ENCODE measurements at regions of chr17 and their contacts with region 1.

Region 1: GRCh38 chr17:64025732-64026294 is 5.4 kb upstream of the ICAM2 start:
- DNase-seq: peak; percentile 89 to 98 (median 93)
- ATAC-seq: peak; percentile 84
- H3K4me3 ChIP-seq: peak overlapping the region; percentile 46
- H3K4me3 Mint-ChIP-seq: peak overlapping the region; percentile 68
- H3K27ac ChIP-seq: peak overlapping the region; percentile 74 to 91
- H3K27ac Mint-ChIP-seq: peak overlapping the region; percentile 100
- H3K4me1 ChIP-seq: peaks cover 78% of the 10 kb centered on the region
- H3K4me1 Mint-ChIP-seq: peaks cover 59% of the 10 kb centered on the region
- H3K27me3 ChIP-seq: no peaks in the 10 kb centered on the region
- H3K27me3 Mint-ChIP-seq: no peaks in the 10 kb centered on the region
- CTCF ChIP-seq: peak; percentile 99

Region 2: DNA sequence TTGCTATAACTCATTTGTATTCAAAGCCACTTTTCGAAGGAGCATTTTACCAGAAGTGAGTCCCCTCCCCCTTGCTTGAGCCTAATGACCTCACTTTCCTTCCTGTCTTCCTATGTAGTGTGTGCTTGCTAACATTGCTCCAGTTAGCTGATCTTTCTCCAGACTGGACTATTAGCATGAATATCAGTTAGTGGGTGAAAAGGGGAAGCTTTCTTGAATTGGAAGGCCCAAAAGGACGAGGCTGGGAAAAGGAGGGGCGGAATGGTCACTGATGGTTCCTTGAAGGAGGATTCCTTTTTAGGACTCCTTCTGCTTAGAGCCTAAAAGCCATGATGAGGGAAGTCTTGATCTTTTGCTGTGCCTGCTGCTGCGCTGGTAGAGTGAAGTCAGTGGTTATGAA is 391.6 kb before region 1 on chr17:
- CTCF ChIA-PET with region 1: no interaction called
- POLR2A ChIA-PET with region 1: no interaction called
- intact Hi-C with region 1: no loop called
- DNase-seq: no peak
- ATAC-seq: no peak
- H3K4me3 ChIP-seq: no peak overlapping the region
- H3K4me3 Mint-ChIP-seq: no peak overlapping the region
- H3K27ac ChIP-seq: no peak overlapping the region
- H3K27ac Mint-ChIP-seq: no peak overlapping the region
- H3K4me1 ChIP-seq: peaks cover 10% of the 10 kb centered on the region
- H3K4me1 Mint-ChIP-seq: peaks cover 66% of the 10 kb centered on the region
- H3K27me3 ChIP-seq: no peaks in the 10 kb centered on the region
- H3K27me3 Mint-ChIP-seq: no peaks in the 10 kb centered on the region
- CTCF ChIP-seq: no peak

Region 3: GRCh38 chr17:63919311-63919723 is 106.5 kb before region 1 on chr17:
- CTCF ChIA-PET with region 1: interaction called, 75 read pairs
- POLR2A ChIA-PET with region 1: interaction called, 13 read pairs
- intact Hi-C with region 1: loop called (anchors 1 kb)
- DNase-seq: peak; percentile 58 to 89 (median 66)
- ATAC-seq: peak; percentile 100
- H3K4me3 ChIP-seq: no peak overlapping the region
- H3K4me3 Mint-ChIP-seq: no peak overlapping the region
- H3K27ac ChIP-seq: no peak overlapping the region
- H3K27ac Mint-ChIP-seq: peak overlapping the region; percentile 9
- H3K4me1 ChIP-seq: peaks cover 8% of the 10 kb centered on the region
- H3K4me1 Mint-ChIP-seq: peaks cover 6% of the 10 kb centered on the region
- H3K27me3 ChIP-seq: no peaks in the 10 kb centered on the region
- H3K27me3 Mint-ChIP-seq: no peaks in the 10 kb centered on the region
- CTCF ChIP-seq: peak; percentile 95

Region 4: DNA sequence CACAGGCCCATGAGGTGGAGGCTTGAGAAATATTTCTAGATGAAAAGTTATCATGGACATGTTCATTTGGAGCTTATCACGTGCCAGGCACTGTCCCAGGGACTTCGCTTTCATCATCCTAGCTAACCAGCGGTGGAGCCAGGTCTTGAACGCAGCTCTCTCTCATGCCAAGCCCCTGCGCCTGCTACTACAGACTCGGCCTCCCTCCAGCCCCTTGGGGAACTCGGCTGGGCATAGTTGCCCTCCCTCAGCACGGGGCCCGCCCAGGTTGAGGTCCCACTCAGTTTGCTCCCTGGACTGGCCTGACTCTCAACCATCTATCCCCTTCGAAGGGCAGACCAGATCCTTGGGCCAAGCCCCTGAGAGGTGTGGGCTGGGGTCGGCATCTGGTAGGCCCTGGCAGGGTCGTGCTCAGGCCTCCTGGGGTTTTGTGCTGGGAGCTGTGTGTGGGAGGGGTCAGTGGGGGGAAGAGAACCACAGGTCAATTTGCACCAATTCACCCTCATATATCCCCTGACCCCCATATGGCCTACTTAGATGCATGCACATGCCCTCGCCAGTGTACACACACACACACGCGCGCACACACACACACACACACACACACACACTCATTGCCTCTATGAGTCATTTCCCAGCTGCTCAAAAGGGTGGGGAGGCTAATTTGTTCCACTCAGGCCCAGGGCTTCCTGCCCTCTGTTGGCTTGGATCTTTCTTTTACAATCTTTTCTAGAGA is 41.0 kb before region 1 on chr17:
- CTCF ChIA-PET with region 1: interaction called, 30 read pairs
- POLR2A ChIA-PET with region 1: interaction called, 14 read pairs
- intact Hi-C with region 1: no loop called
- DNase-seq: peak in 11 of 14 experiments; percentile 24 to 83 (median 49)
- ATAC-seq: peak; percentile 93
- H3K4me3 ChIP-seq: no peak overlapping the region
- H3K4me3 Mint-ChIP-seq: peak overlapping the region; percentile 63
- H3K27ac ChIP-seq: peak overlapping the region in 1 of 2 donors; percentile 0
- H3K27ac Mint-ChIP-seq: peak overlapping the region; percentile 77
- H3K4me1 ChIP-seq: peaks cover 26% of the 10 kb centered on the region
- H3K4me1 Mint-ChIP-seq: peaks cover 26% of the 10 kb centered on the region
- H3K27me3 ChIP-seq: no peaks in the 10 kb centered on the region
- H3K27me3 Mint-ChIP-seq: no peaks in the 10 kb centered on the region
- CTCF ChIP-seq: no peak

Region 5: GRCh38 chr17:64005734-64006167 is 20.1 kb before region 1 on chr17:
- CTCF ChIA-PET with region 1: interaction called, 111 read pairs
- POLR2A ChIA-PET with region 1: interaction called, 156 read pairs
- intact Hi-C with region 1: no loop called
- DNase-seq: no peak
- ATAC-seq: no peak
- H3K4me3 ChIP-seq: no peak overlapping the region
- H3K4me3 Mint-ChIP-seq: no peak overlapping the region
- H3K27ac ChIP-seq: peak overlapping the region in 1 of 2 donors; percentile 64
- H3K27ac Mint-ChIP-seq: peak overlapping the region; percentile 75
- H3K4me1 ChIP-seq: peaks cover 51% of the 10 kb centered on the region
- H3K4me1 Mint-ChIP-seq: peaks cover 47% of the 10 kb centered on the region
- H3K27me3 ChIP-seq: no peaks in the 10 kb centered on the region
- H3K27me3 Mint-ChIP-seq: no peaks in the 10 kb centered on the region
- CTCF ChIP-seq: no peak

Region 6: DNA sequence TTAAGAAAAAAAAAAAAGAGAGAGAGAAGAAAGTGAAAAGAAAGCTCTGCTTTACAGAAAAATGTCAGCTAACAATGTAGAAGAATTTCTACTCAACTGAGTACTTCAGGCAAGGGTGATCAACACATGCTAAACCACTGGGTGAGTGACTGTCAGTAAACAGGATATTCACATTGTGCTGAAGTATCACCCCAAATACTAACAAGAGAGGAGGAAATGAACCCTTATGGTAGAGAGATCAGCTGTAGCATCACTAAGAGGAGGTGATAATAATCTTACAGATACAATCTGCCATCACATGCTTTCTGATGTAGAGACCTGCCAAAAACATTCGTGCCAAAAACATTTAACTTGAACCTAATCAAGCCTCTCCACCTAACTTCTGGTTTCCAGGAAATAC is 25.3 kb after region 1 on chr17:
- CTCF ChIA-PET with region 1: interaction called, 9 read pairs
- POLR2A ChIA-PET with region 1: interaction called, 49 read pairs
- intact Hi-C with region 1: loop called in 1 of 2 experiments (anchors 2 kb)
- DNase-seq: peak in 5 of 14 experiments; percentile 16 to 88 (median 69)
- ATAC-seq: peak; percentile 100
- H3K4me3 ChIP-seq: no peak overlapping the region
- H3K4me3 Mint-ChIP-seq: peak overlapping the region; percentile 17
- H3K27ac ChIP-seq: peak overlapping the region in 1 of 2 donors; percentile 78
- H3K27ac Mint-ChIP-seq: peak overlapping the region; percentile 85
- H3K4me1 ChIP-seq: peaks cover 59% of the 10 kb centered on the region
- H3K4me1 Mint-ChIP-seq: peaks cover 57% of the 10 kb centered on the region
- H3K27me3 ChIP-seq: no peaks in the 10 kb centered on the region
- H3K27me3 Mint-ChIP-seq: no peaks in the 10 kb centered on the region
- CTCF ChIP-seq: no peak

Region 7: DNA sequence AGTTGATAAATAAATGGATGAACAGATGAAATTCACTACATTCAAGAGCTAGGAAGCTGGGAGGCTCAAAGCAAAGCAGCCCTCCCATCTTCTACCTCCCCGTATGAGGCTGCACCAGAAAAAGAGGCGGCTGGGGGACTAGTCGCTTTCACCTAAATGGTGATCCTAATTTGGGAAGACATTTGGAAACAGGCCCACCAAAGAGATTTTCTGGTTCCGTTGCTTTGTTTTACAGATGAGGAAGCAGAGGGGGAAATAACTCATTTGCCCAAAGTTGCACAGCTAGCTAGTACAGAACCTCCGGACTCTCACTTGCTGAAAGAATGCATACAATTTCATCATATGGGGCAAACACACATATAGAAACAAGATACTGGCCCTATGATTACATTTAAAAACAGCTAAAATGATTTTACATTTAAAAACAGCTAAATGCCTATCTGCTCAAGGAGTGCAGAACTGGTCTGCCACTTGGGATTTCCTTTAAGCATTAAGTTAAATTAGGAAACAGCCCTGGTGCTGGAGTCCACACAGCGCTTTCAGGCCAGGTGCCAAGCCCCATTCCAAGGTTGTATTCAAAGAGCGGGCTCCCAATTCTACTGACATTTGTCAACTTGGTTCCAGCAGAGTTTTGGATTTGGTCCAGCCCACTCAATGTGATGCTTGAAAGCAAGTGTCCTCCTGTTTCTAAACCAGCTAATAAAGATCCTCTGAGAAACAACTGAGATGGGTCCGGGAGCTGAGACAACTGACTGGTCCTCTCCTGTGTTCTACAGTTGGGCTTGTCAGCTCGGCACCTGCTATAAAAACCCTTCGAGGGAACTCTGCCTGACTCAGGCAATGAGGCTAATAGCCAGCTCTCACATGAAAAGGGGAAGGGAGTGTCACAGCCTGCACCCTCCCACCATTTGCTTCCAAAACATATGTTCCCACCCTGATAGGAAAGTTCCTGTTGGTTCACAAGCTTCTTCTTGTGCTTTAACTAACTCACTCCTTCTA is 92.5 kb after region 1 on chr17:
- CTCF ChIA-PET with region 1: interaction called, 10 read pairs
- POLR2A ChIA-PET with region 1: no interaction called
- intact Hi-C with region 1: no loop called
- DNase-seq: peak in 2 of 14 experiments; percentile 44 to 49
- ATAC-seq: no peak
- H3K4me3 ChIP-seq: no peak overlapping the region
- H3K4me3 Mint-ChIP-seq: no peak overlapping the region
- H3K27ac ChIP-seq: no peak overlapping the region
- H3K27ac Mint-ChIP-seq: peak overlapping the region; percentile 35
- H3K4me1 ChIP-seq: peaks cover 73% of the 10 kb centered on the region
- H3K4me1 Mint-ChIP-seq: peaks cover 67% of the 10 kb centered on the region
- H3K27me3 ChIP-seq: no peaks in the 10 kb centered on the region
- H3K27me3 Mint-ChIP-seq: no peaks in the 10 kb centered on the region
- CTCF ChIP-seq: no peak